ENCODE measurements at regions of chr17 and their contacts with region 1.

Region 1: GRCh38 chr17:41015454-41015853 is 6.5 kb upstream of the KRTAP3-1 start:
- DNase-seq: no peak
- ATAC-seq: no peak
- H3K4me3 ChIP-seq: no peak overlapping the region
- H3K4me3 Mint-ChIP-seq: no peak overlapping the region
- H3K27ac ChIP-seq: no peak overlapping the region
- H3K27ac Mint-ChIP-seq: no peak overlapping the region
- H3K4me1 ChIP-seq: no peaks in the 10 kb centered on the region
- H3K4me1 Mint-ChIP-seq: no peaks in the 10 kb centered on the region
- H3K27me3 ChIP-seq: no peaks in the 10 kb centered on the region
- H3K27me3 Mint-ChIP-seq: peaks cover 4% of the 10 kb centered on the region
- CTCF ChIP-seq: no peak

Region 2: DNA sequence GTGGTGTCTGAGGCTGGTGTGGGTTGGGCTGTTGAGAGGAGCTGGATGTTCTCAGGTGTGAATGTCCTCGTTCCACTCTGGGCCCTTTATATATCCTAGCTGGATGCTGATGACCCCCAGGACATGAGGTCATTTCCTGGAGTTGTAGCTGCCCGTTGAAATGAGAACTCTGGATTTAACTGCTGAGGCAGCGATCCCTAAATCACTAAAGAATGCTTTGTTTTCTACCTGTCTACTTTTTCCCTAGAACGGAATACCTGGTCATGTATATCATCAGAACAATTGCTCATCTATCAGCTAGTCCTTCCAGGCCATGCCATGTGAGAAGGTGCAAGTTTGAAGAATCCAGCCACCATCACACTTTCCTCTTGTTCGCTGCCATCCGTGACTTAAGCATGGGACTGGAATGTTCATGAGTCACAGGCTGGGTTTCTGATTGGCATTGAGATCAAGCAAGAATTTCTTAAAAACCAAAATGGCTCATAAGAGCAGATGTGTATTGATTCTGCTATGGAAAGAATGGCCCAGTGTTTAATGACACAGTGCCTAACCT is 44.7 kb after region 1 on chr17 and contains the start of gene KRTAP2-3:
- CTCF ChIA-PET with region 1: no interaction called
- POLR2A ChIA-PET with region 1: no interaction called
- intact Hi-C with region 1: loop called in 1 of 2 experiments (anchors 1 kb)
- DNase-seq: no peak
- ATAC-seq: no peak
- H3K4me3 ChIP-seq: no peak within 1 kb of the TSS
- H3K4me3 Mint-ChIP-seq: no peak within 1 kb of the TSS
- H3K27ac ChIP-seq: no peak within 1 kb of the TSS
- H3K27ac Mint-ChIP-seq: no peak within 1 kb of the TSS
- H3K4me1 ChIP-seq: no peaks in the 10 kb centered on the region
- H3K4me1 Mint-ChIP-seq: no peaks in the 10 kb centered on the region
- H3K27me3 ChIP-seq: peaks cover 0 to 10% of the 10 kb centered on the region in 2 experiments
- H3K27me3 Mint-ChIP-seq: peaks cover 74% of the 10 kb centered on the region
- CTCF ChIP-seq: no peak
- total RNA-seq, gene KRTAP2-3: not detected

Region 3: GRCh38 chr17:41186872-41187271 is 171.4 kb after region 1 on chr17:
- CTCF ChIA-PET with region 1: no interaction called
- POLR2A ChIA-PET with region 1: no interaction called
- intact Hi-C with region 1: no loop called
- DNase-seq: no peak
- ATAC-seq: no peak
- H3K4me3 ChIP-seq: no peak overlapping the region
- H3K4me3 Mint-ChIP-seq: no peak overlapping the region
- H3K27ac ChIP-seq: no peak overlapping the region
- H3K27ac Mint-ChIP-seq: no peak overlapping the region
- H3K4me1 ChIP-seq: no peaks in the 10 kb centered on the region
- H3K4me1 Mint-ChIP-seq: no peaks in the 10 kb centered on the region
- H3K27me3 ChIP-seq: no peaks in the 10 kb centered on the region
- H3K27me3 Mint-ChIP-seq: peaks cover 26% of the 10 kb centered on the region
- CTCF ChIP-seq: no peak

Measured in CD4-positive, alpha-beta T cell (primary cell).